OCI-LY7 (cell line): ENCODE measurements at regions of chr7 and their contacts with region 1.

Region 1: DNA sequence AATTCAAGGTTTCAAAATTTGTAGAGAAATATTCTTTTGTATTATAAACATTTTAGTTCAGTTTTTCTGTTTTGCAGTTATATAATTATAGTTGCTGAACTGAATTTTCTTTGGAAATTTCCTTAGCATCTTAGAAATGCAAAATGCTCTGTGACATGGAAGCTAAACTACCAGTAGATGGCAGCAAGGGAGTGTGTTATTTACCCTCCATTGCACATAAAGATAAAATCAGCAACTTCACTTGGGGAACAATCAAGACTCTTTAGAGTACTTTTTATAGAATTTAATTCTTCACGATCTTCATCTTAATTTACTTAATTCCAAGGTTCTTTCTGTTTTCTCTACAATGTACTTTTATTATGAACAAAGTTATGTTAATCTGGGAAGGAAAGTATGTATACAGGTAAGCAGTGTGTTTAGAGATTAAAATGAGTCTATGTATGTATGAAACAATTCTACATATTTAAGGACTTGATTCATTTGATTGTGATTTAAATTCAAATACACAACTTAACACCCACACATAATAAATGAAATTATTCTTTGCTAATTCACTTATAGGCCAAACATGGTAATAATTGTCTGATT is 404.2 kb downstream of the THSD7A start:
- DNase-seq: peak; percentile 56
- H3K4me3 ChIP-seq: no peak overlapping the region
- H3K27ac ChIP-seq: no peak overlapping the region
- H3K4me1 ChIP-seq: no peaks in the 10 kb centered on the region
- CTCF ChIP-seq: peak; percentile 92

Region 2: DNA sequence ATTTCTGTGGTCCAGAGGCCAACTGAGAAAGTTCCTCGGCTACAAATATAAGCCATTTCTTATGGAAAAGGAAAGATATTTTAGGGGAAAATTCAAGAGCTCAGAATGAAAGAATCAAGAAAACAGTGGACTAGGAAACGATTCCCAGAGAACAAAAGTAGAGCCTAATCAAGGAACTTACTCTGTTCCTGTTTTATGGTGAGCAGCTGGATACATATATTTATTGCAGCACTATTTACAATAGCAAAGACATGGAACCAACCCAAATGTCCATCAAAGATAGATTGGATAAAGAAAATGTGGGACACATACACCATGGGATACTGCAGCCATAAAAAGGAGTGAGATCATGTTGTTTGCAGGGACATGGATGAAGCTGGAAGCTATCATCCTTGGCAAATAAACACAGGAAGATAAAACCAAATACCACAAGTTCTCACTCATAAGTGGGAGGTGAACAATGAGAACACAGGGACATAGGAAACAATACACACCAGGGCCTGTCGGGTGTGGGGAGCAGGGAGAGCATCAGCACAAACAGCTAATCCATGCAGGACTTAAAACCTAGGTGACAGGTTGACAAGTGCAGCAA is 105.5 kb after region 1 on chr7:
- CTCF ChIA-PET with region 1: no interaction called
- POLR2A ChIA-PET with region 1: no interaction called
- intact Hi-C with region 1: no loop called
- DNase-seq: no peak
- H3K4me3 ChIP-seq: no peak overlapping the region
- H3K27ac ChIP-seq: no peak overlapping the region
- H3K4me1 ChIP-seq: peaks cover 2% of the 10 kb centered on the region
- CTCF ChIP-seq: no peak

Region 3: GRCh38 chr7:12067141-12067831 is 639.5 kb after region 1 on chr7:
- CTCF ChIA-PET with region 1: no interaction called
- POLR2A ChIA-PET with region 1: no interaction called
- intact Hi-C with region 1: loop called (anchors 5 kb)
- DNase-seq: peak; percentile 23
- H3K4me3 ChIP-seq: no peak overlapping the region
- H3K27ac ChIP-seq: no peak overlapping the region
- H3K4me1 ChIP-seq: no peaks in the 10 kb centered on the region
- CTCF ChIP-seq: peak; percentile 68

Region 4: GRCh38 chr7:12322284-12322902 is 894.6 kb after region 1 on chr7:
- CTCF ChIA-PET with region 1: no interaction called
- POLR2A ChIA-PET with region 1: no interaction called
- intact Hi-C with region 1: loop called (anchors 5 kb)
- DNase-seq: peak; percentile 11
- H3K4me3 ChIP-seq: no peak overlapping the region
- H3K27ac ChIP-seq: no peak overlapping the region
- H3K4me1 ChIP-seq: no peaks in the 10 kb centered on the region
- CTCF ChIP-seq: peak; percentile 83

Region 5: DNA sequence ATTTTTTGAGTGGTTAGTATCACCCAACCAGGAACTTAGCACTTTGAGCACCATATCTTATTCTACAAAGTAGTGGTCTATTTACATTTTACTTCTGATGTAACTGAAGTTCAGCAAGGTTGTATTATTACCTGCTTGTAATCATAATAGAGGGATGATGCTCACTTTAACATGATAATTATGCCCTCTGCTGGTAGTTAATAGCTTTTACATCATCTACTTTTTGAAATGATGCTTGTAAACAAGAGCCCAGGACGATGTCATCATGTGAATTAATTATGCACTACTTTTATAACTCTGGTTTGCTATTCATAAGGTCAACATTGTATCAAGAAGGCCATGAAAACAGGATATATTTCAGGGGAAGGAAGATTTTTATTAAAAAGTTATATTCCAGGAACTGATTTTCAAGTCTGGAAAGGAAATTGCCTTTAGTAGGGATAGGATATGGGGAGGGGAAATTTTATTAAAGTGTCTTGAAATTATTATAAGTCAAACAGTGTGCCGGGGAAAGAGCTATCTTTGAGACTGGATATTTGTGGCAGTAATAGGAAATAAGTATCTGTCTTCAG is 1062.4 kb after region 1 on chr7:
- CTCF ChIA-PET with region 1: no interaction called
- POLR2A ChIA-PET with region 1: no interaction called
- intact Hi-C with region 1: loop called (anchors 10 kb)
- DNase-seq: peak; percentile 45
- H3K4me3 ChIP-seq: no peak overlapping the region
- H3K27ac ChIP-seq: no peak overlapping the region
- H3K4me1 ChIP-seq: no peaks in the 10 kb centered on the region
- CTCF ChIP-seq: peak; percentile 80